GM12878 (cell line): ENCODE measurements at regions of chr7 and their contacts with region 1.

Region 1: GRCh38 chr7:55309040-55309991 is 55.8 kb upstream of the LANCL2 start:
- DNase-seq: peak; percentile 99
- ATAC-seq: peak; percentile 89
- H3K4me3 ChIP-seq: no peak overlapping the region
- H3K27ac ChIP-seq: peak overlapping the region; percentile 74
- H3K4me1 ChIP-seq: peaks cover 52% of the 10 kb centered on the region
- H3K27me3 ChIP-seq: no peaks in the 10 kb centered on the region
- CTCF ChIP-seq: no peak
- EP300 ChIP-seq: peak; percentile 97 to 99
- POLR2A ChIP-seq: no peak; the same call in 1 of the 2 replicates
- RAD21 ChIP-seq: no peak

Region 2: DNA sequence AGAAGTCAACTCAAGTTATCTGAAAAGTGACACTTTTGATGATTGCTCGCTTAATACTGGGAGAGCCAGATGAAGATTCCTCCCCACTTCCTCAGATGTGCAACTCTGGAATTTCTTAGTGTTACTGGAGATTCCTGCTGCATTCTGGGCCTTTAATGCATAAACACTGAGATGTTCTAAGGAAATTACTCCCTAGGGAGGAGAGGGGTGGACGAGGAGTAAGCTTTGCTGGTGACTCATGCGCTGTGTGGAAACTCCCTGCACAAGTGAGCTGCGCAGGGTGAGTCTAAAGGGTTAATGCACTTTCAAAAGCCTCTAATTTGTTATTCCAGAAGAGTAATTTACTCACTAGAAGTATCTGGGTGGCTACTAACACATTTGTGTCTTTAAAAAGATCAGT is 244.2 kb before region 1 on chr7:
- CTCF ChIA-PET with region 1: no interaction called
- POLR2A ChIA-PET with region 1: interaction called, 3 read pairs
- RAD21 ChIA-PET with region 1: interaction called, 15 read pairs
- SMC1A ChIA-PET with region 1: interaction called, 9 read pairs
- in situ Hi-C with region 1: no loop called
- intact Hi-C with region 1: no loop called
- DNase-seq: peak; percentile 31
- ATAC-seq: peak; percentile 88
- H3K4me3 ChIP-seq: no peak overlapping the region
- H3K27ac ChIP-seq: no peak overlapping the region
- H3K4me1 ChIP-seq: peaks cover 3% of the 10 kb centered on the region; the same call in 1 of the 2 replicates
- H3K27me3 ChIP-seq: no peaks in the 10 kb centered on the region
- CTCF ChIP-seq: no peak
- EP300 ChIP-seq: no peak; a peak in 1 of 4 replicates
- POLR2A ChIP-seq: no peak
- RAD21 ChIP-seq: no peak

Region 3: GRCh38 chr7:55288070-55288824 is 21.1 kb before region 1 on chr7:
- CTCF ChIA-PET with region 1: interaction called, 74 read pairs
- POLR2A ChIA-PET with region 1: interaction called, 4 read pairs
- RAD21 ChIA-PET with region 1: interaction called, 24 read pairs
- SMC1A ChIA-PET with region 1: interaction called, 68 read pairs
- in situ Hi-C with region 1: no loop called
- intact Hi-C with region 1: no loop called
- DNase-seq: no peak
- ATAC-seq: peak; percentile 86
- H3K4me3 ChIP-seq: no peak overlapping the region
- H3K27ac ChIP-seq: no peak overlapping the region
- H3K4me1 ChIP-seq: no peaks in the 10 kb centered on the region
- H3K27me3 ChIP-seq: no peaks in the 10 kb centered on the region; a peak in 1 of 4 replicates
- CTCF ChIP-seq: no peak; a peak in 1 of 6 replicates
- EP300 ChIP-seq: no peak
- POLR2A ChIP-seq: no peak
- RAD21 ChIP-seq: peak; percentile 51

Region 4: GRCh38 chr7:55374213-55374612 is 64.9 kb after region 1 on chr7:
- CTCF ChIA-PET with region 1: no interaction called
- POLR2A ChIA-PET with region 1: no interaction called
- RAD21 ChIA-PET with region 1: interaction called, 15 read pairs
- SMC1A ChIA-PET with region 1: interaction called, 11 read pairs
- in situ Hi-C with region 1: no loop called
- intact Hi-C with region 1: no loop called
- DNase-seq: no peak
- ATAC-seq: no peak; the same call in 2 of the 3 replicates
- H3K4me3 ChIP-seq: no peak overlapping the region
- H3K27ac ChIP-seq: peak overlapping the region; percentile 25; the same call in 1 of the 2 replicates
- H3K4me1 ChIP-seq: peaks cover 12% of the 10 kb centered on the region
- H3K27me3 ChIP-seq: no peaks in the 10 kb centered on the region
- CTCF ChIP-seq: no peak
- EP300 ChIP-seq: no peak
- POLR2A ChIP-seq: no peak
- RAD21 ChIP-seq: no peak

Region 5: DNA sequence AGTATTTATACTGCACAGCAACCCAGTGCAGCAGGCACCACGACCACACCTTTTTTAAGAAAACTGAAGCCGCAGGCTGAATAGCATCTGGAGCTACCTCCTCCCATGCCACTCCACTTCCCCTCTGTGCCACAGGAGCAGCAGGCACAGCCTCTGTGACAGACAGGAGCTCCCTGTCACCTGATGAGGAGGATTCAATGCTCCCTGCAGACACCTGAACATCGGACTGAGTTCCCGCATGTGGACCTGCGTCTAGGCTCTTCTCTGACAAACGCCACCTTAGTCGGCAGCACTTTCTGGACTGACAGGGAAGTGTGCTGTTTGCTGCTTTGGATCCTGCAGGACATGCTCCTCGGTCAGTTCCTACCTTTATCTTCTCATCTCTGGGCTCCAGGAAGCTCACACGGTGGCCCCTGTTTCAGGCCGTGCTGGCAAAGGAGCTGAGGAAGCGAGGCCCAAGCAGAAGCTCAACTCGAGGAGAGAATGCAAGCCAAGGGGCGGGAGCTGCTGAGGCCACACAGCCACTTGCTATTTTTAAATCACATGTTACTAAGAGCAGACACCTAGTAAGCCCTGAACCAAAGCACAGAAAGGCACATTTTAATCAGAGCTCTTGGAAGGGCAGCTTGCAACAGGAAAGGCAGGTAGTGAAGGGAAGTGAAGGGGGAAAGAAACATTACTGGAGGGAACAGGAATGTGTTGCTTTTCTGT is 206.4 kb after region 1 on chr7:
- CTCF ChIA-PET with region 1: interaction called, 7 read pairs
- POLR2A ChIA-PET with region 1: interaction called, 4 read pairs
- RAD21 ChIA-PET with region 1: interaction called, 14 read pairs
- SMC1A ChIA-PET with region 1: interaction called, 10 read pairs
- in situ Hi-C with region 1: no loop called
- intact Hi-C with region 1: no loop called
- DNase-seq: no peak
- ATAC-seq: peak; percentile 51
- H3K4me3 ChIP-seq: peak overlapping the region; percentile 56; the same call in 1 of the 2 replicates
- H3K27ac ChIP-seq: peak overlapping the region; percentile 62
- H3K4me1 ChIP-seq: peaks cover 69% of the 10 kb centered on the region
- H3K27me3 ChIP-seq: no peaks in the 10 kb centered on the region
- CTCF ChIP-seq: no peak
- EP300 ChIP-seq: 0 out of 4 replicates have a peak, but pooled peaks of 1 of the 2 experiments have one; percentile 16
- POLR2A ChIP-seq: peak; percentile 60
- RAD21 ChIP-seq: no peak

Region 6: GRCh38 chr7:55964261-55965099 is 655.2 kb after region 1 on chr7 and contains the start of gene NIPSNAP2:
- CTCF ChIA-PET with region 1: no interaction called
- POLR2A ChIA-PET with region 1: no interaction called
- RAD21 ChIA-PET with region 1: no interaction called
- SMC1A ChIA-PET with region 1: no interaction called
- in situ Hi-C with region 1: no loop called
- intact Hi-C with region 1: loop called (anchors 10 kb)
- DNase-seq: no peak
- ATAC-seq: peak; percentile 92
- H3K4me3 ChIP-seq: peak within 1 kb of the TSS; percentile 91
- H3K27ac ChIP-seq: peak within 1 kb of the TSS; percentile 73
- H3K4me1 ChIP-seq: peaks cover 6% of the 10 kb centered on the region
- H3K27me3 ChIP-seq: no peaks in the 10 kb centered on the region
- CTCF ChIP-seq: peak; percentile 34 to 67 (median 48); a peak in 4 of 6 replicates
- EP300 ChIP-seq: no peak
- POLR2A ChIP-seq: peak; percentile 84
- RAD21 ChIP-seq: peak; percentile 78
- polyA plus RNA-seq, gene NIPSNAP2: 24.7 to 29.9 TPM